Naive thymus-derived CD4-positive, alpha-beta T cell (primary cell): ENCODE measurements at regions of chr4 and their contacts with region 1.

Region 1: DNA sequence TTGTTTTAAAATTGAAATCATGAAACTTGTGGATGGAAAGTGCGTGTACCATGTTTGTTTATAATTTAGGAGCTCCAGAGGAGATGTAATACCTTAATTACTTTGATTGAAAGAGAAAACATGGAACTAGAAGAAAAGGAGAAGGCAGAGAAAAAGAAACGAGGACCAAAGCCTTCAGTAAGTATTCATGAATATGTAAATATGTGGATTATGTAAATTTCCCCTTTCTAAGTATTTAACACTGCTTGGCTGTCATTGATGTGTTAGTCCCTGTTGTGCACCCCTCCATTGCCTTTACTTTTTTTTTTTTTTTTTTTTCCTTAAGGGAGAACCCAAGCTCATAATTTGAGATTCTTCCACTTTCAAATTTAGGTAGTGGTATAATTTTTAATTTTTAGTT is 36.4 kb downstream of the SMARCA5 start:
- DNase-seq: no peak
- ATAC-seq: no peak
- H3K4me3 ChIP-seq: no peak overlapping the region
- H3K4me3 Mint-ChIP-seq: no peak overlapping the region
- H3K27ac ChIP-seq: no peak overlapping the region
- H3K27ac Mint-ChIP-seq: peak overlapping the region in 2 of 9 donors; percentile 23 to 60
- H3K4me1 ChIP-seq: no peaks in the 10 kb centered on the region
- H3K4me1 Mint-ChIP-seq: peaks cover 0 to 20% (median 0%) of the 10 kb centered on the region in 7 donors
- H3K27me3 ChIP-seq: no peaks in the 10 kb centered on the region
- H3K27me3 Mint-ChIP-seq: no peaks in the 10 kb centered on the region

Region 2: DNA sequence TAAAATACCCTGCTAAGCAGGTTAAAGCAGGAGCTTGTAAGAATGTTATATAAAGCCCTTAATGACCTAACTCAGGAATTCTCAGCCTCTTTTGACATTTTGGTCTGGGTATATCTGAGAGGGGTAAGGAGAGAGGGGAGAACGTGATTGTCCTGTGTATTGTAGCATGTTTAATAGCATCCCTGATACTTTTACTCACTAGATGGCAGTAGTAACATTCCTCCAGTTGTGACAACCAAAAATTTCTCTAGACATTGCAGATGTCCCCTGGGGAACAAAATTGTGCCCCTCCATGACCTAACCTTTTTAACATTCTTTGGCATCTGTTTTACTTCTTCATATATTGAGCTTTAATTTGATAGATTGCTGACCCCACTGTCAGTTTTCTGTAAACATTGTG is 18.5 kb before region 1 on chr4:
- CTCF ChIA-PET with region 1: interaction called, 3 read pairs
- POLR2A ChIA-PET with region 1: no interaction called
- intact Hi-C with region 1: loop called in 1 of 2 experiments (anchors 2 kb)
- DNase-seq: no peak
- ATAC-seq: peak; percentile 57
- H3K4me3 ChIP-seq: no peak overlapping the region
- H3K4me3 Mint-ChIP-seq: no peak overlapping the region
- H3K27ac ChIP-seq: no peak overlapping the region
- H3K27ac Mint-ChIP-seq: peak overlapping the region in 2 of 9 donors; percentile 11 to 80
- H3K4me1 ChIP-seq: no peaks in the 10 kb centered on the region
- H3K4me1 Mint-ChIP-seq: peaks cover 9 to 25% (median 19%) of the 10 kb centered on the region in 7 donors
- H3K27me3 ChIP-seq: no peaks in the 10 kb centered on the region
- H3K27me3 Mint-ChIP-seq: no peaks in the 10 kb centered on the region